K562 (cell line): ENCODE measurements at regions of chr5 and their contacts with region 1.

Region 1: DNA sequence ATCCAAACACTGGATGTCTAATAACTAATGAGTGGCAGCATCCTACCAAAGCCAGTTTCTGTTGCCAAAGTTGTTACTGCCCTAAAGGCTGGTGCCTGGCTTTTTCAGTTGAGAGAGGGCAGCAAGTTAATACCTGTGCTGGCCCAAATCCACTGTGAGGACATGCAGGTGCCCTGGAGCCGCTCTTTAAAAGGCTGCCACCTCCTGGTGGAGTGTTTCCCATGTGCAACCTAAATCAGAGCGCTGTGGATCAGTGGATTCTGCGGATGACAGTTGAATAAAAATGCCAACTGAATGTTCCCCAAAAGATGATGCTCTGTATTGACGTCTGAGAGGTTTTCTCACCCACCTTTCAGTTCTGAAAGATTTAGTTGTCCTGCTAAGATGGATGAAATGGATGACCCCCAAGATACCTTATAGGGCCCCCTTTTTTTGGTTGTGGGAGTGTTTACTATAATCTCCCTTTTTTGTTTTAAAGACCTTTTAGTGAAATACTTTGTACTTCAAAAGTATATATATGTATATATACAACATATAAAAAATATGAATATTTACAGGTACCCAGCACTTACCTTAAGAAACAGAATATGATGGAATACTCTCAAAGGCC is 146.4 kb downstream of the EGFLAM start:
- DNase-seq: peak in 2 of 4 experiments; percentile 43 to 53
- ATAC-seq: peak; percentile 90
- H3K4me3 ChIP-seq: no peak overlapping the region
- H3K27ac ChIP-seq: no peak overlapping the region
- H3K4me1 ChIP-seq: no peaks in the 10 kb centered on the region
- H3K27me3 ChIP-seq: peaks cover 11 to 16% of the 10 kb centered on the region in 2 experiments
- CTCF ChIP-seq: peak; percentile 64 to 70 (median 66)
- EP300 ChIP-seq: no peak
- POLR2A ChIP-seq: no peak
- RAD21 ChIP-seq: peak; percentile 38 to 65

Region 2: DNA sequence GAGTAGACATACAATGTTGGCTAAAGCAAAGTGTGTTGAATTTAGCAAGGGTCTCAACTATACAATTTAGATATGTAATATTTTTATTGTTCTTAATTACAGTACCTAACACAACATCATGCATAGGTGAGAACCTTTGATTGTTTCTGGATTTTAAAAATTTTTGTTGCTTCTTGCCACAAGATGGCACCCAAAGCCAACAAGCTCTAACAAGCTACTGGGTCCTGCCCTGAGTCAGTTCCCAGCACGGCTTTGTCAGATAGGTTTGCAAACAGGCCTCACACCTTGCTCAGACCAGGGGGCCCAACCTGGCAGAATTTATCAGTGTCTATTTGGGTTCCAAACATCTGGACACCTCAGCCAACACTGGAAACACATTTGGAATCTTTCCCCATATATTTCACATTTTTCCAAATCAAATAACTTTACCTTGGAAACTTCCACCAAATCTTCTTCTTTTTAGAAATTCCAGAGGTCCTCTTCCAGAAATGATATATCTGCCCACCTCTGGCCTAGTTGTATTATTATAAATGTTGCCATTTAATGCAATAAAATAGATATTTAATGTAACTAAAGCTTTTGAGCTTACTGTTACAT is 195.9 kb before region 1 on chr5:
- CTCF ChIA-PET with region 1: interaction called, 4 read pairs
- POLR2A ChIA-PET with region 1: interaction called, 3 read pairs
- in situ Hi-C with region 1: no loop called
- intact Hi-C with region 1: loop called (anchors 2 kb)
- DNase-seq: peak; percentile 34 to 69 (median 41)
- ATAC-seq: peak; percentile 86
- H3K4me3 ChIP-seq: no peak overlapping the region
- H3K27ac ChIP-seq: no peak overlapping the region
- H3K4me1 ChIP-seq: no peaks in the 10 kb centered on the region
- H3K27me3 ChIP-seq: no peaks in the 10 kb centered on the region
- CTCF ChIP-seq: peak; percentile 64 to 83 (median 70)
- EP300 ChIP-seq: no peak
- POLR2A ChIP-seq: no peak
- RAD21 ChIP-seq: peak; percentile 72 to 81

Region 3: DNA sequence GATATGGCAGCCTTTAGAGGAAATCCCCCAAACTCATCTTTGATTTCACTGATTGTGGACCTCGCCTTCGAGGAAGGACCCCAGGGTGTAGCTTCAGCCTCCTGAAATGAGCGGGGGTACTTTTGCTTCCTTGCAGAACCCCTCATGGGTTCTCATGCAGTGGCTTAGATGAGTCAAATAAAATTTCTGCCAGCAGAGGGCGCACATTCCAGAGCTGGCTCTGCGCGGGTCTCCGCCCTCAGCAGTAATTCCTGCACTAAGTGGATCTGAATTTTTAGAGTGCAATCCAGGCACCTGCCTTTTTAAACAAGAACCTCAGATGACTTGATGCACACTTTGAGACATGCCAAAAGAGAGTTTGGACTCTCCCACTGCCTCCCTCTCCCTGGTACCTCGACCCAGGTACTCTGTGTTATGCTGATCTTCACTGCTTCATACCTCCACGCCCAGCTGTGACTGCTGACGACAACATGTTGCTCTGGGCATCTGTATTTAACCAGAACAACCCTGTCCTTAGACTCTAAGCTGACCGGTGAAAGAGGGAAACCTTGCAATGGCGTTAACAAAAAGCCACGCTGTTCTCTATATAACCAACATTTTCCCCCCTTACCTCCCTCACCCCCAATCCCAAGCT is 139.1 kb before region 1 on chr5:
- CTCF ChIA-PET with region 1: no interaction called
- POLR2A ChIA-PET with region 1: no interaction called
- in situ Hi-C with region 1: no loop called
- intact Hi-C with region 1: loop called (anchors 1 kb)
- DNase-seq: peak; percentile 69 to 80 (median 74)
- ATAC-seq: peak; percentile 99
- H3K4me3 ChIP-seq: no peak overlapping the region
- H3K27ac ChIP-seq: no peak overlapping the region
- H3K4me1 ChIP-seq: no peaks in the 10 kb centered on the region
- H3K27me3 ChIP-seq: peaks cover 11 to 20% of the 10 kb centered on the region in 2 experiments; a peak in 3 of 5 replicates
- CTCF ChIP-seq: peak; percentile 80 to 85 (median 82)
- EP300 ChIP-seq: no peak
- POLR2A ChIP-seq: no peak
- RAD21 ChIP-seq: peak; percentile 41 to 64

Region 4: DNA sequence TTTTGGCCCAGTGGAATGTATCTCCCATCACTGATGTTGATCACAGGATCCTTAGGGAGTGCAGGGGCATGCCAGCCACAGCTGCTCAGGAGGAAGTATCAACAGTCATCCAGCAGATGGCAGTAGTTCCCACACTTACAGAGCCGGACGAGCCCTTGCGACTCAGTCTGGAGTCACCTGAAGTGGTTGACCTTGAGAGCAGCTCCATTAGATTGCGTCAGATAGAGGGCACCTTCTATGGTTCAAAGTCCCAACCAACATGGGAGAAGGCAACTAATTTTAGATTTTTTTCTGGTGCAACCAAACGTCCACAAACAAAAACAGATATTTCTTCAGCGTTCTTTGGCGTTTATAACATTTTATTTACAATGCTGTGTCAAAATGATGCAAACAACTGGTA is 21.9 kb before region 1 on chr5:
- CTCF ChIA-PET with region 1: interaction called, 4 read pairs
- POLR2A ChIA-PET with region 1: no interaction called
- in situ Hi-C with region 1: no loop called
- intact Hi-C with region 1: loop called (anchors 1 kb)
- DNase-seq: peak; percentile 79 to 88 (median 85)
- ATAC-seq: peak; percentile 94
- H3K4me3 ChIP-seq: no peak overlapping the region
- H3K27ac ChIP-seq: no peak overlapping the region
- H3K4me1 ChIP-seq: peaks cover 10 to 26% of the 10 kb centered on the region in 2 experiments
- H3K27me3 ChIP-seq: no peaks in the 10 kb centered on the region
- CTCF ChIP-seq: peak; percentile 82 to 96 (median 87)
- EP300 ChIP-seq: peak; percentile 52; the same call in 1 of the 2 replicates
- POLR2A ChIP-seq: no peak
- RAD21 ChIP-seq: peak; percentile 57 to 83

Region 5: GRCh38 chr5:38426986-38427950 is 22.5 kb after region 1 on chr5:
- CTCF ChIA-PET with region 1: no interaction called
- POLR2A ChIA-PET with region 1: no interaction called
- in situ Hi-C with region 1: no loop called
- intact Hi-C with region 1: no loop called
- DNase-seq: no peak
- ATAC-seq: no peak; the same call in 2 of the 3 replicates
- H3K4me3 ChIP-seq: no peak overlapping the region
- H3K27ac ChIP-seq: no peak overlapping the region
- H3K4me1 ChIP-seq: no peaks in the 10 kb centered on the region; a peak in 1 of 5 replicates
- H3K27me3 ChIP-seq: peaks cover 0 to 11% of the 10 kb centered on the region in 2 experiments; a peak in 3 of 5 replicates
- CTCF ChIP-seq: no peak
- EP300 ChIP-seq: no peak
- POLR2A ChIP-seq: no peak
- RAD21 ChIP-seq: no peak